ENCODE measurements at regions of chr7 and their contacts with region 1.

Region 1: GRCh38 chr7:105387621-105388372 is 924 bp downstream of the SRPK2 start:
- DNase-seq: peak in 1 of 2 experiments; percentile 67
- H3K4me3 ChIP-seq: peak overlapping the region; percentile 81 to 99 (median 88)
- H3K27ac ChIP-seq: no peak overlapping the region; the same call in 1 of the 2 replicates
- H3K4me1 ChIP-seq: peaks cover 0 to 3% (median 0%) of the 10 kb centered on the region in 4 experiments; a peak in 2 of 7 replicates
- H3K27me3 ChIP-seq: no peaks in the 10 kb centered on the region
- CTCF ChIP-seq: no peak
- EP300 ChIP-seq: no peak
- POLR2A ChIP-seq: no peak
- RAD21 ChIP-seq: no peak

Region 2: DNA sequence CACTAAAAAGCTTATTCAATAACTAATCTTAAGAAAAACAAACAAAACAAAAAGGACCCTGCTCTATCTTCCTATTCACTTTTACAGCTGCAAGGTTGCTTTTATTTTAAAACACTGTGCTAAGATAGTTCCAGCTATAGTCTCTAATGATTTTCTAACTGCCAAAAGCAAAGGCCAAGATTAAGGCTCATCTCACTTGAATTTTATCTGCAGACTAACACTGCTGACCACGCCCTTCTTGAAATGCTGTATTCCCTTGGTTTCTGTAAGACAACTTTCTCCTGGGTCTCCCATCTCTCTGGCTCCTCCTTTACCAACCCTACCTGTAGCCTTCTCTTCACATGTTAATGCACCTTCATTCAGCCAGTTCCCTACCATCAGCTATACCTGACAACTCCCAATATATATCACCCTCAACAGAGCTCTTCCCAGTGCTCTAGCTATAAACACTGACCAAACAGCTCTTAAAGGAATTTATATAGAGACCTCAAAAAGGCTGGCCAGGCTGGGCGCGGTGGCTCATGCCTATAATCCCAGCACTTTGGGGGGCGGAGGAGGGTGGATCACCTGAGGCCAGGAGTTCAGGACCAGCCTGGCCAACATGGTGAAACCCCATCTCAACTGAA is 10.8 kb before region 1 on chr7:
- CTCF ChIA-PET with region 1: interaction called, 13 read pairs
- POLR2A ChIA-PET with region 1: interaction called, 28 read pairs
- DNase-seq: no peak
- H3K4me3 ChIP-seq: no peak overlapping the region
- H3K27ac ChIP-seq: no peak overlapping the region
- H3K4me1 ChIP-seq: peaks cover 1 to 7% (median 3%) of the 10 kb centered on the region in 4 experiments; a peak in 5 of 7 replicates
- H3K27me3 ChIP-seq: no peaks in the 10 kb centered on the region; a peak in 1 of 7 replicates
- CTCF ChIP-seq: no peak
- EP300 ChIP-seq: no peak
- POLR2A ChIP-seq: no peak
- RAD21 ChIP-seq: no peak

Measured in H1 (cell line).